PC-9 (cell line): ENCODE measurements at regions of chr6 and their contacts with region 1.

Region 1: DNA sequence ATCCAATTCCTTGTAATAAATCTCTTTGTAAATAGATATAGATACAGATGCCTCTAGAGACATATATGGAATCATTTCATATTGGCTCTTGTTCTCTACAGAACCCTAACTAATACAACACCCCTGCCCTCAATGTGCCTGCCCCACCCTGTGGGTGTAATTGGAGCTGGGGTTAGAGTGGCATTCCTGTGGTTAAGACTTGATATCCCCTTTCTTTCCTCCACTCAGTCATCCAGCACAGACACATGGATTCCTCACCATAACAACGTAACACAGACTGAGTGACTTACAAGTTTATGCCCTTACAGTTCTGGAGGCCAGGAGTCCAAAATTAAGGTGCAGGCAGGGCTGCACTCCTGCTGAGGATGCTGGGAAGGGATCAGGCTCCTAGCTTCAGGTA is 42.8 kb downstream of the C6orf118 start:
- DNase-seq: no peak
- H3K4me3 ChIP-seq: no peak overlapping the region
- H3K27ac ChIP-seq: no peak overlapping the region
- H3K4me1 ChIP-seq: no peaks in the 10 kb centered on the region
- H3K27me3 ChIP-seq: no peaks in the 10 kb centered on the region
- CTCF ChIP-seq: no peak

Region 2: GRCh38 chr6:164200071-164200470 is 1066.5 kb before region 1 on chr6:
- CTCF ChIA-PET with region 1: no interaction called
- POLR2A ChIA-PET with region 1: interaction called, 12 read pairs
- intact Hi-C with region 1: no loop called
- DNase-seq: no peak
- H3K4me3 ChIP-seq: no peak overlapping the region
- H3K27ac ChIP-seq: no peak overlapping the region
- H3K4me1 ChIP-seq: no peaks in the 10 kb centered on the region
- H3K27me3 ChIP-seq: no peaks in the 10 kb centered on the region
- CTCF ChIP-seq: no peak